HEK293 (cell line): ENCODE measurements at regions of chr17 and their contacts with region 1.

Region 1: DNA sequence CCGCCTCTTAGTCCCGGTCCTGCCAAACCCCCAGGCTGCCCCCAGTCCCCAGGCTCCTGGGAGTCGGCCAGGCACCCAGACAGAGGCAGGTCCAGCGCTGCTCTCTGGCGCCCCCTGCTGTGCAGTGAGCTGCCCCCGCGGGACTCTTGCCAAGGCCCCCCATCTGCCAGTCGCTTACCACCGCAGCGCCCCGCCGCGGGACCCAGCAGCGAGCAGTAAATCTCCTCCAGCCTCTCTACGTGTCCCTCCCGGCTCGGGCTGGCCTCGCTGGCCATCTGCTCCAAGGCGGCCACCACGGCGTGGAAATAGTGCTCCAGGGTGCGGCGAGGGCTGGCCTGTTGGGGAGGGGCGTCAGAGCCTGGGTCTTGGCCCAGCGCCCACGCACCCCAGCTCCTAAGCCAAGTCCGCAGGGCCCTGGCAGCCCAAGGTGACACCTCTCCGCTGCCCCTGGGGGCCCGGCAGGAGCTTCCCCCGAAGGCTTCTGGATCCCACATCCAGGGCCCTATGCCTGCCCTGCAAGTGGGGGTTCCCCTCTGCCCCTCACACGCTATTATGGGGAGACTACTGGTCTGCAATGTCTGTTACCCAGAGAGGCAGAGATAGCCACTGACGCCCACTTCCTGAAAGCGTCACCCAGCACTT is 33.7 kb upstream of the MFSD6L start:
- H3K4me3 ChIP-seq: no peak overlapping the region
- H3K27ac ChIP-seq: no peak overlapping the region
- H3K4me1 ChIP-seq: no peaks in the 10 kb centered on the region
- CTCF ChIP-seq: peak; percentile 71

Region 2: GRCh38 chr17:8843344-8843743 is 10.5 kb after region 1 on chr17:
- CTCF ChIA-PET with region 1: interaction called, 25 read pairs
- POLR2A ChIA-PET with region 1: no interaction called
- H3K4me3 ChIP-seq: no peak overlapping the region
- H3K27ac ChIP-seq: no peak overlapping the region
- H3K4me1 ChIP-seq: no peaks in the 10 kb centered on the region
- CTCF ChIP-seq: no peak

Region 3: GRCh38 chr17:8849311-8850041 is 16.6 kb after region 1 on chr17:
- CTCF ChIA-PET with region 1: interaction called, 25 read pairs
- POLR2A ChIA-PET with region 1: no interaction called
- H3K4me3 ChIP-seq: no peak overlapping the region
- H3K27ac ChIP-seq: no peak overlapping the region
- H3K4me1 ChIP-seq: no peaks in the 10 kb centered on the region
- CTCF ChIP-seq: no peak

Region 4: GRCh38 chr17:8894673-8895578 is 62.1 kb after region 1 on chr17:
- CTCF ChIA-PET with region 1: interaction called, 11 read pairs
- POLR2A ChIA-PET with region 1: no interaction called
- H3K4me3 ChIP-seq: no peak overlapping the region
- H3K27ac ChIP-seq: no peak overlapping the region
- H3K4me1 ChIP-seq: no peaks in the 10 kb centered on the region
- CTCF ChIP-seq: peak; percentile 68

Region 5: DNA sequence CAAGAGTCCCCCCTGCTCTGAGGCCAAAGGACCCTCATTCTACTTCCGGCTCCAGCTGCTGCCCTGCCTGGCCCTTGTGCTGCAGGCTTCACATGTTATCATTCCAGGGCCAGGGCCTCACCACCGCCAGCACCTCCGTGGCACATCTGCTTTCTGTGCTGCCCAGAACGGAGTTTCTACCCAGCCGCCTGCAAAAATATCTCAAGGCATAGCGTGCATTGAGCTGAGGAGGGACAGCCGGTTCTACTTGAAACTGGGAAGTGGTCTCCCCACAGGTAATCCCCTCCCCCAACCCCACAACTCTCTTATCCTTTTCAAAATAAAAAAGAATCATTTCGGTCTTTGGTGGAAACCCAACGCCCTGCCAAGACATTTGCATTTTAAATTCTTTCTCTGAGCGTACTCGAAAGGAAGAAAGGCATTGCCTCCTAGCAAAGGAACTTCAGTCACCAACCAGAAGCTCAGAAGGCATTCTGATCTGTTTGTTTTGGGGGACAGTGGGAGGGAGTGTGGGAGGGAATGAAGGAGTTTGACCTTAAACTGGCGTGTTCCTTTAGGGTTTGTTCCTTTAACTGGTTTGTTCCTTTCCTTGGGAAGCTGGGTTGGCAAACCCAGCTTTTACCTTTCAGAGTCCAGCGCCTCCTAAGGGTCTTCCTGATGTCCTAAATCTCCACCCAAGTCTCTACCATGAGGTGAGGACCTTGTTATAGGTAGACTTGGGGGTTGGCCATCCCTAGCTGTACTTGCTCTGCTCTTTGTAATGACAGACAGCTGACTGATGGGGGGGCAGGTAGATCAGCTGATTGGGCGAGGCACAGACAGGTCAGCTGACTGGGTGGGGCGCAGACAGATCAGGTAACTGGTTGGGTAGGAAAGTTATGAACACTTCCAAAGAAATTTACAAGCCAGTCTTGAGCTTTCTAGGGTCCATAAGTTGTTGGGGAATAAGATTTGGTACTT is 68.1 kb after region 1 on chr17:
- CTCF ChIA-PET with region 1: interaction called, 11 read pairs
- POLR2A ChIA-PET with region 1: no interaction called
- H3K4me3 ChIP-seq: no peak overlapping the region
- H3K27ac ChIP-seq: no peak overlapping the region
- H3K4me1 ChIP-seq: no peaks in the 10 kb centered on the region
- CTCF ChIP-seq: no peak

Region 6: GRCh38 chr17:9217151-9218056 is 384.6 kb after region 1 on chr17:
- CTCF ChIA-PET with region 1: no interaction called
- POLR2A ChIA-PET with region 1: no interaction called
- H3K4me3 ChIP-seq: no peak overlapping the region
- H3K27ac ChIP-seq: no peak overlapping the region
- H3K4me1 ChIP-seq: no peaks in the 10 kb centered on the region
- CTCF ChIP-seq: no peak